ENCODE measurements at regions of chr7 and their contacts with region 1.

Region 1: DNA sequence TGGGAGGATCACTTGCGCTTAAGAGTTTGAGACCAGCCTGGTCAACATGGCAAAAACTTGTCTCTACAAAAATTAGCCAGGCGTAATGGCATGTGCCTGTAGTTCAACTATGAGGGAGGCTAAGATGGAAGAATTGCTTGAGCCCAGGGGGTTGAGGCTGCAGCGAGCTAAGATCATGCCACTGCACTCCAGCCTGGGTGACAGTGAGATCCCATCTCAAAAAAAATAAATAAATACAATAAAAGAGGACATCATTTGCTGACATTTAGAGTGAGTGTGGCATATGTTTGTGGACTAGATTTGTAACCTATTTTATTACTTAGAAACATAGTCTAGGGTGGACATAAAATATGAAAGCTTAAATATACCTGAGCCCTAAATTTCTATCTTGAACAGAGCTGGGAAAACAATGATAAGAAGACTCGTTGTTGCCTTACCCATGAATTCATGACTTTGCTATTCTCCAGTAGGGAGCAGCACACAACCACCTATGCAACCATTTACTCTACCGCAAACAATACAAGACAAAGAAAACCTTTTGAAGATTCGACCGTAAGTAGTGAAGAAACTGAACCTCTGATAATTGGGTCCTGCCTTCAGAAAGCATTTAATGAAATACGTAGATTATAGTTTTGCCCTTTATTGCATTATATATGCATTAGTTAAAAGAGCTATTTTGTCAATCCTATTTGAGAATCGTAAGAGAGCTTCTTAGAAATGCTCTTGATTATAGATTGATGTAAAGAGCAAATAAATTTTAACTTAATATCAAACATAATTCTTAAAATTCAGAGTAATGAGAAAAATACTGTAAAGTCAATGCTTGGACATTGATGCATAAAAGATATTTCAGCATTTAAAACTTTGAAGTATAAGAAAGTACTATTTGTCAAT is 83.5 kb downstream of the GNAT3 start:
- DNase-seq: peak; percentile 35 to 50
- H3K4me3 ChIP-seq: no peak overlapping the region
- H3K27ac ChIP-seq: no peak overlapping the region
- H3K4me1 ChIP-seq: no peaks in the 10 kb centered on the region
- H3K27me3 ChIP-seq: no peaks in the 10 kb centered on the region
- CTCF ChIP-seq: peak; percentile 75

Region 2: GRCh38 chr7:80659120-80660055 is 231.0 kb after region 1 on chr7:
- CTCF ChIA-PET with region 1: interaction called, 5 read pairs
- POLR2A ChIA-PET with region 1: no interaction called
- intact Hi-C with region 1: loop called (anchors 1 kb)
- DNase-seq: no peak
- H3K4me3 ChIP-seq: no peak overlapping the region
- H3K27ac ChIP-seq: no peak overlapping the region
- H3K4me1 ChIP-seq: no peaks in the 10 kb centered on the region
- H3K27me3 ChIP-seq: no peaks in the 10 kb centered on the region
- CTCF ChIP-seq: peak; percentile 96

Region 3: DNA sequence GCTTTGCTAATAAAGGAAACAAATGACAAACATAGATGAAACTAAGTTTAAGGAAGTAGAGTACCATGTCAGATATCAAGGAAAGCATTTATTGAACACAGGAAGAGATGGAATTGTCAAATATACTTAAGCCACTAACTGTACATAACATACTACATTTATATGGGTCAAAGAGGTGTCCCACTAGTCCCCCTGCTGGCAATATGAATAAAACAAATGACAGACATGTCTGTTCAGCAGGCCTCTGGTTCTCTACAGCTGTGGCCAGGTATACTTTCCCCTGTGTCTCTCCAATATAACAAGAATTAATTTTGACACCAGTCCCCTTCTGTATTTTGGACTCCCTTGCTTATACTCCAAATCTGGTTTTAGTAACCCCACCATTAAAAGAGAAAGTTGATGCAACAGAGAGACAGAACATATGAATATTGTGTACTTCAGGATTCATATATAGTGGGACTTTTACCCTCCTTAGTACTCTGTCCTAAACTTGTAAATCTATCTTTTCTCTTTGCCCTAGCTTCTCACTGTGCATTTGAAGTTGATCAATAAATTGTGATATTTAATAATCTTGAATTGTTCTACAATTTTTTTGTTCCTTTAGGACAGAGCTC is 253.0 kb after region 1 on chr7:
- CTCF ChIA-PET with region 1: no interaction called
- POLR2A ChIA-PET with region 1: no interaction called
- intact Hi-C with region 1: loop called (anchors 1 kb)
- DNase-seq: peak in 1 of 2 experiments; percentile 5
- H3K4me3 ChIP-seq: no peak overlapping the region
- H3K27ac ChIP-seq: no peak overlapping the region
- H3K4me1 ChIP-seq: no peaks in the 10 kb centered on the region
- H3K27me3 ChIP-seq: no peaks in the 10 kb centered on the region
- CTCF ChIP-seq: peak; percentile 72

Region 4: GRCh38 chr7:81469869-81470723 is 1041.7 kb after region 1 on chr7:
- CTCF ChIA-PET with region 1: no interaction called
- POLR2A ChIA-PET with region 1: no interaction called
- intact Hi-C with region 1: loop called (anchors 1 kb)
- DNase-seq: peak; percentile 50 to 65
- H3K4me3 ChIP-seq: no peak overlapping the region
- H3K27ac ChIP-seq: no peak overlapping the region
- H3K4me1 ChIP-seq: no peaks in the 10 kb centered on the region
- H3K27me3 ChIP-seq: no peaks in the 10 kb centered on the region
- CTCF ChIP-seq: peak; percentile 81

Measured in PC-9 (cell line).